Mammary epithelial cell (primary cell): ENCODE measurements at regions of chr1 and their contacts with region 1.

Region 1: GRCh38 chr1:193059268-193060225 is at the starts of genes RO60 and UCHL5:
- DNase-seq: peak; percentile 99
- H3K4me3 ChIP-seq: peak within 1 kb of the TSS; percentile 79 to 94 (median 87)
- H3K27ac ChIP-seq: peak within 1 kb of the TSS; percentile 94
- H3K4me1 ChIP-seq: peaks cover 24% of the 10 kb centered on the region
- H3K27me3 ChIP-seq: no peaks in the 10 kb centered on the region
- CTCF ChIP-seq: no peak
- total RNA-seq, gene RO60: 56.1 to 118 TPM
- total RNA-seq, gene UCHL5: 26.3 to 52.6 TPM

Region 2: GRCh38 chr1:192846950-192847349 is 212.6 kb before region 1 on chr1:
- CTCF ChIA-PET with region 1: no interaction called
- dilution Hi-C with region 1: no loop called
- in situ Hi-C with region 1: no loop called
- intact Hi-C with region 1: no loop called
- DNase-seq: no peak
- H3K4me3 ChIP-seq: no peak overlapping the region
- H3K27ac ChIP-seq: no peak overlapping the region
- H3K4me1 ChIP-seq: no peaks in the 10 kb centered on the region
- H3K27me3 ChIP-seq: no peaks in the 10 kb centered on the region
- CTCF ChIP-seq: no peak

Region 3: GRCh38 chr1:193104906-193105820 is 45.6 kb after region 1 on chr1 and contains the start of gene GLRX2:
- CTCF ChIA-PET with region 1: interaction called, 3 read pairs
- dilution Hi-C with region 1: no loop called
- in situ Hi-C with region 1: no loop called
- intact Hi-C with region 1: loop called (anchors 1 kb)
- DNase-seq: peak; percentile 86
- H3K4me3 ChIP-seq: peak within 1 kb of the TSS; percentile 56 to 86 (median 86)
- H3K27ac ChIP-seq: peak within 1 kb of the TSS; percentile 77
- H3K4me1 ChIP-seq: peaks cover 12% of the 10 kb centered on the region
- H3K27me3 ChIP-seq: no peaks in the 10 kb centered on the region
- CTCF ChIP-seq: peak in 1 of 2 donors; percentile 22
- total RNA-seq, gene GLRX2: 6.7 to 36.3 TPM

Region 4: GRCh38 chr1:193121616-193122593 is 62.4 kb after region 1 on chr1 and contains the start of gene CDC73:
- CTCF ChIA-PET with region 1: no interaction called
- dilution Hi-C with region 1: no loop called
- in situ Hi-C with region 1: no loop called
- intact Hi-C with region 1: loop called (anchors 1 kb)
- DNase-seq: peak; percentile 97
- H3K4me3 ChIP-seq: peak within 1 kb of the TSS; percentile 90 to 97 (median 93)
- H3K27ac ChIP-seq: peak within 1 kb of the TSS; percentile 86
- H3K4me1 ChIP-seq: peaks cover 3% of the 10 kb centered on the region
- H3K27me3 ChIP-seq: no peaks in the 10 kb centered on the region
- CTCF ChIP-seq: peak; percentile 78 to 95
- total RNA-seq, gene CDC73: 27.5 to 58.3 TPM